Ascending aorta (tissue), 2 donors: ENCODE measurements at regions of chr22 and their contacts with region 1.

Region 1: DNA sequence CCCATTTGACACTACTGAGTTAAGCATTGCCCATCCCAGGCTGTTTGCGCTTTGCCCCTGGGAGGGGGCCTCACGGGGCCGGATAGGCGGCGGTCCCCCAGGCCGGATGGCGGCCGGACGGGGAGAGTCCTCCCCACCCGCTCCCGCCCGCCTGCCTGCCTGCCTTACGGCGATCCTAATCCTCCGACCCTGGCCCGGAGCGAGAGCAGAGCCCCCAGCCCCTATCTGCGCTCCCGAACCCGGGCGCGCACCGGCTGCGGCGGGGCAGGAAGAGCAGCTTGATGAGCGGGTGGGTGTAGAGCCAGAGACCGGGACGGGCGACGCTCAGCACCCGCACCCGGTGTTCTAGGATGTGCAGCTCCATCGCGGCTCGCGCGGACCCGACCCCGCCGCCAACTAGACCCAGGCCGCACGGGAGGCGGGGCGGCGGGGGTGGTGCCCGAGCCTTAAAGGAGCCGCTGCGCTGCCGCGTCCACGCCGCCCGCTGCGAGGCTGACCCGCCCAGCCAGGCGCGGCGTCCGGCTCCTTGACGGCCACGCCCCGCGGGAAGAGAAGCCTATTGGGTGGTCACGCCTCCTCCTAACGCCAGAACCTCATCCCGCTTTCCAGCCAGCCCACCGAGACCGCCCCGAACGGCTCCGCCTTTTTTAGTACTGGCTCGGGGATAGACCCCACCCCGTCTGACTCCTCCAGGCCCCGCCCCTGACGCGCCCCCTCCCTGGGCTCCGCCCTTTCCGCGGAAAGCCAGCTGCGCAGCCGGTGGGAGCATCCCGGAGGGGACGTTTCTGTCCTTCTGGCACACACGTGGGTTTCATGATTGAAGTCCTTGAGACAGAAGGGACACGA is at the start of gene CASTOR1:
- DNase-seq: peak; percentile 96 to 99
- H3K4me3 ChIP-seq: peak within 1 kb of the TSS; percentile 74 to 94
- H3K27ac ChIP-seq: peak within 1 kb of the TSS; percentile 94 to 96
- H3K4me1 ChIP-seq: peaks cover 19 to 33% of the 10 kb centered on the region in 2 donors
- H3K27me3 ChIP-seq: no peaks in the 10 kb centered on the region
- CTCF ChIP-seq: no peak
- total RNA-seq, gene CASTOR1: 55.9 TPM

Region 2: GRCh38 chr22:29481612-29482011 is 807.7 kb before region 1 on chr22:
- intact Hi-C with region 1: no loop called
- DNase-seq: no peak
- H3K4me3 ChIP-seq: no peak overlapping the region
- H3K27ac ChIP-seq: no peak overlapping the region
- H3K4me1 ChIP-seq: peaks cover 2 to 6% of the 10 kb centered on the region in 2 donors
- H3K27me3 ChIP-seq: peaks cover 7% of the 10 kb centered on the region
- CTCF ChIP-seq: no peak

Region 3: GRCh38 chr22:30262917-30263741 is 26.2 kb before region 1 on chr22:
- intact Hi-C with region 1: loop called (anchors 1 kb)
- DNase-seq: peak; percentile 61 to 87
- H3K4me3 ChIP-seq: peak overlapping the region in 1 of 2 donors; percentile 31
- H3K27ac ChIP-seq: no peak overlapping the region
- H3K4me1 ChIP-seq: no peaks in the 10 kb centered on the region
- H3K27me3 ChIP-seq: no peaks in the 10 kb centered on the region
- CTCF ChIP-seq: peak; percentile 96 to 98 (median 96)

Region 4: DNA sequence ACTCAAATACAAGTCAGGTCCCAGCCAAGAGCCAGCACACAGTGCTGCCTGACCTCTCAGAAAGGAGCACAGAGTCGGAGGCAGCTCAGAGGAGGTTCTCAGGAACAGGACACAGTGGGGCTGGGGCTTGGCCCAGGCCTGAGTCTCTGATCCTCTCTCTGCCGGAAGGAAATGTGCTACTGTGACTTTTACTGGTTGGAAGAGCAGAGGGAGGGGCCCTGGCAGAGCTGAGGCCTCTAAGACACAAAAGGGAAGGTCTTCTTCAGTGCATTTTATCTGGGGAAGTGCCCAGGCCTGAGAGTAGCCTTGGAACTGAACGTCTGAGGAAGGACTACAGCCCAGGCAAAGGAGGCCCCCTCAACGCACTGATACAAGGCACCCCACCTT is 16.2 kb after region 1 on chr22:
- intact Hi-C with region 1: loop called (anchors 2 kb)
- DNase-seq: peak in 1 of 2 donors; percentile 83
- H3K4me3 ChIP-seq: peak overlapping the region; percentile 25 to 29
- H3K27ac ChIP-seq: peak overlapping the region; percentile 86
- H3K4me1 ChIP-seq: peaks cover 50 to 93% of the 10 kb centered on the region in 2 donors
- H3K27me3 ChIP-seq: no peaks in the 10 kb centered on the region
- CTCF ChIP-seq: no peak

Region 5: DNA sequence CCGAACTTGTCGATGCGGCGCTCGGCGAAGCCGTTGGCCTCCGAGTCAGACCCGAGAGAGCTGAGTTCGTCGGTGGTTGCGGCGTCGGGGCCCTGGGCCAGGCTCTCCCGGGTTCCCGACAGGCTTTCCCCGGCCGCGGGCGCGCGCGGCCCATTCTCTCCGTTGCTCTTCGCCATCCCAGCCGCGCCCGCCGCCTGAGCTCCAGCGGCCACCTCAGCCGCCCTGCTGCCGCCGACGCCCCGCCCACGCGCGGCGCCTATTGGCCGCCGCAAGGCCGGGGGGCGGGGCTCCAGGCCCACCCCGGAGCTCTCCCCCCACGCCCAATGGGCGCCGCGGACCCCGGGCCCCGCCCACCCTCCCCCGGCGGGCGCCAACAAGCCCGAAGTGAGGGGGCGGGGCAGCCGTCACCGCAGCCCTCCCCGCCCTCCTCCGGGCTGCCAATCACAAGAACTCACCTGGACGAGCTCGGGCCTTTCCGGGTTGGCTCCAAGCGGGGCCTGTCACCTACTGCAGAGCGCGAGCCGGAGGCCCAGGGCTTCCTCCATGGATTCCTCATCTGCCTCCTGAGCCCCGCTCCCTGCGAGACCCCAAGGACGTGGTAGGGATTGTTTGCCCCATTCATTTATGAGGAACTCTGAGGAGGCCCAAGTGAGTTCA is 37.5 kb after region 1 on chr22 and contains the start of gene TBC1D10A:
- intact Hi-C with region 1: loop called (anchors 1 kb)
- DNase-seq: peak; percentile 80 to 95
- H3K4me3 ChIP-seq: peak within 1 kb of the TSS; percentile 95 to 100
- H3K27ac ChIP-seq: peak within 1 kb of the TSS; percentile 94 to 95
- H3K4me1 ChIP-seq: peaks cover 10 to 39% of the 10 kb centered on the region in 2 donors
- H3K27me3 ChIP-seq: no peaks in the 10 kb centered on the region
- CTCF ChIP-seq: no peak
- total RNA-seq, gene TBC1D10A: 107 TPM

Region 6: GRCh38 chr22:30340911-30341685 is 51.7 kb after region 1 on chr22:
- intact Hi-C with region 1: loop called (anchors 5 kb)
- DNase-seq: peak in 1 of 2 donors; percentile 87
- H3K4me3 ChIP-seq: no peak overlapping the region
- H3K27ac ChIP-seq: peak overlapping the region; percentile 51 to 57
- H3K4me1 ChIP-seq: peaks cover 0 to 18% of the 10 kb centered on the region in 2 donors
- H3K27me3 ChIP-seq: no peaks in the 10 kb centered on the region
- CTCF ChIP-seq: no peak

Region 7: GRCh38 chr22:30356449-30357235 is 67.3 kb after region 1 on chr22 and contains the starts of genes CCDC157 and SF3A1:
- intact Hi-C with region 1: loop called (anchors 1 kb)
- DNase-seq: peak; percentile 39 to 92
- H3K4me3 ChIP-seq: peak within 1 kb of the TSS; percentile 75 to 97
- H3K27ac ChIP-seq: peak within 1 kb of the TSS; percentile 92 to 99
- H3K4me1 ChIP-seq: peaks cover 11 to 24% of the 10 kb centered on the region in 2 donors
- H3K27me3 ChIP-seq: no peaks in the 10 kb centered on the region
- CTCF ChIP-seq: no peak
- total RNA-seq, gene CCDC157: 7.0 TPM
- total RNA-seq, gene SF3A1: 92.9 TPM

Region 8: GRCh38 chr22:30373331-30374325 is 84.3 kb after region 1 on chr22:
- intact Hi-C with region 1: no loop called
- DNase-seq: no peak
- H3K4me3 ChIP-seq: no peak overlapping the region
- H3K27ac ChIP-seq: no peak overlapping the region
- H3K4me1 ChIP-seq: no peaks in the 10 kb centered on the region
- H3K27me3 ChIP-seq: no peaks in the 10 kb centered on the region
- CTCF ChIP-seq: no peak

Region 9: DNA sequence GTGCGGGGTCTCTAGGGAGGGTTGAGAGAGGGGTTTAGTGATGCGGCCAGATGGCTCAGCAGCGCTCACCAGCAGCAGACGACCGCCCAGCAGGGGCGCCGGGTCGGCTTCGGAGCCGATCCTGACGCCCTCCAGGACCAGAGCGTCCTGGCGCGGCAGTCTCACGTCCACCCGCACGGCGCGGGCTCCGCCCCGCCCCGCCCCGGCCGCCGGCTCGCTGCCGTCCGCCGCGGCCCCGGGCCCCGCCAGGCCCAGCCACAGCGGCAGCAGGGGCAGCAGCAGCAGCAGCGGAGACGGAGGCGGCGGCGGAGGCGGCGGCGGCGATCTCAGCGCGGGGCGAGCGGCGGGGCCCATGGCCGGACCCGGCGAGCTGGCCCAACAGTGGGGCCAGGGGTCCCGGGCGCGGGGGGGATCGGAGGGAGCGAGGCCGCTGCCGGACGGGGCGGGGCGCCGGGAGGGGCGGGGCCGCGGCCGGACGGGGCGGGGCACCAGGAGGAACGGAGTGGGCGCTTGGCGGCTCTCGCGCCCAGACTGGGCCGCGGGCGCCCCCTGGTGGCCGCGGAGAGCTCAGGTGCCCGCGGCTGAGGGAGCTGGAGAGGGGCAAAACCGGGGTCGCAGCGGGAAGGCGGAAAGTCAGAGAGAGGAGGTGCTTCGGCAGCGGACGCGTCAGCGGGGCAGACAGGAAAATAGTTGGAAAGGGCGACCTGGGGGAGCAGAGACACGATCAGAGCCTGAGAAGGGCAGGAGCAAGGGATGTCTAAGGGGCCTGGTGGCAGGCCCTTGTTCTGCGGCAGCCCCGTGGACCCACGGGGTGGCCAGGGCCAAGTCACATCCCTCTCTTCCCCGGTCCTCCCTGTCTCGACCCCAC is 97.8 kb after region 1 on chr22 and contains the start of gene RNF215:
- intact Hi-C with region 1: loop called (anchors 1 kb)
- DNase-seq: peak in 1 of 2 donors; percentile 88
- H3K4me3 ChIP-seq: peak within 1 kb of the TSS; percentile 73 to 86
- H3K27ac ChIP-seq: peak within 1 kb of the TSS; percentile 59 to 70
- H3K4me1 ChIP-seq: peaks cover 8 to 11% of the 10 kb centered on the region in 2 donors
- H3K27me3 ChIP-seq: no peaks in the 10 kb centered on the region
- CTCF ChIP-seq: peak; percentile 75 to 95 (median 85)
- total RNA-seq, gene RNF215: 6.7 TPM